CD4-positive, alpha-beta T cell (primary cell): ENCODE measurements at regions of chr22 and their contacts with region 1.

Region 1: GRCh38 chr22:32474635-32475467 is at the start of gene FBXO7:
- DNase-seq: peak; percentile 68 to 94 (median 82)
- ATAC-seq: peak; percentile 82
- H3K4me3 ChIP-seq: peak within 1 kb of the TSS; percentile 91
- H3K4me3 Mint-ChIP-seq: peak within 1 kb of the TSS; percentile 95
- H3K27ac ChIP-seq: peak within 1 kb of the TSS; percentile 84 to 95
- H3K27ac Mint-ChIP-seq: no peak within 1 kb of the TSS
- H3K4me1 ChIP-seq: peaks cover 20% of the 10 kb centered on the region
- H3K4me1 Mint-ChIP-seq: peaks cover 26% of the 10 kb centered on the region
- H3K27me3 ChIP-seq: no peaks in the 10 kb centered on the region
- H3K27me3 Mint-ChIP-seq: no peaks in the 10 kb centered on the region
- CTCF ChIP-seq: peak; percentile 23
- total RNA-seq, gene FBXO7: 161 to 169 TPM

Region 2: DNA sequence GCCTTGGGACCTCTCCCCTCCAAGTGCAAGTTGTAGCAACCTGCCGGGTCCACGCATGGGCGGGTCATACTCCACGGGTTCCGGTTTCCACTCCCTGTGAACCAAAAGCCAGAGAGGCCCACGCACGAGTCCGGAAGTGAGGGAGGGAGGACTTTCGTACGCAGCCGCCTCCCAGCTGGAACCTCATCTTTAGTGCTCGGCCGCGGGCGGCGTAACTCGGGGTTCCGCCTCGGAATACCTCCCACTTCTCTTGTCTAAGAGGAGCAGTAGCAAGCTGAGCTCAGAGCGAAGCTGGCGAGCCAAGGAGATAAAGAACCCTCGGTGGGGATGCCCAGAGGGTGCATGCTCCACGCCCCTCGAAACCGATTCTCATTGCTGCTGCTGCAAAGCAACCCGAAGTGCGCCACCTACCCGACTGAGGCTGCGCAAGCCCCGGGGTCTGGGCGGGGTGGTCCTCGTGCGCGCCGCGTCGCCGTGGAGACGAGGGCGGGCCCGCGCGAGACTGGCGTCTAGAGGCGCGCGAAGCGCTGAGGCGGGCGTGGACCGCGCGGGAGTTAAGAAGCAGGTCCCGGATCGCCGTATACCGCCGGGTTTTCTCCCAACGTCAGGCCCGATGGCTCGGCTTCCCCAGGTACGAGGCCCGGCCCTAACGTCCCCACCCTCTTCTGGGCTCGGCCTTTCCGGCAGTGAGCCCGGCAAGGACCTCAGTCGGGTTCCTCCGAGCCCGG is 978.7 kb before region 1 on chr22 and contains the start of gene SFI1:
- CTCF ChIA-PET with region 1: no interaction called
- POLR2A ChIA-PET with region 1: no interaction called
- intact Hi-C with region 1: loop called in 1 of 2 experiments (anchors 10 kb)
- DNase-seq: peak; percentile 93 to 98 (median 96)
- ATAC-seq: peak; percentile 78
- H3K4me3 ChIP-seq: peak within 1 kb of the TSS; percentile 100
- H3K4me3 Mint-ChIP-seq: peak within 1 kb of the TSS; percentile 82
- H3K27ac ChIP-seq: peak within 1 kb of the TSS; percentile 94 to 97
- H3K27ac Mint-ChIP-seq: peak within 1 kb of the TSS; percentile 97
- H3K4me1 ChIP-seq: peaks cover 64% of the 10 kb centered on the region
- H3K4me1 Mint-ChIP-seq: peaks cover 57% of the 10 kb centered on the region
- H3K27me3 ChIP-seq: no peaks in the 10 kb centered on the region
- H3K27me3 Mint-ChIP-seq: no peaks in the 10 kb centered on the region
- CTCF ChIP-seq: peak; percentile 37
- total RNA-seq, gene SFI1: 281 to 291 TPM

Region 3: GRCh38 chr22:31970490-31971444 is 504.1 kb before region 1 on chr22:
- CTCF ChIA-PET with region 1: interaction called, 16 read pairs
- POLR2A ChIA-PET with region 1: no interaction called
- intact Hi-C with region 1: no loop called
- DNase-seq: peak; percentile 77 to 93 (median 87)
- ATAC-seq: peak; percentile 93
- H3K4me3 ChIP-seq: peak overlapping the region; percentile 56
- H3K4me3 Mint-ChIP-seq: peak overlapping the region; percentile 82
- H3K27ac ChIP-seq: no peak overlapping the region
- H3K27ac Mint-ChIP-seq: peak overlapping the region; percentile 3
- H3K4me1 ChIP-seq: peaks cover 20% of the 10 kb centered on the region
- H3K4me1 Mint-ChIP-seq: peaks cover 13% of the 10 kb centered on the region
- H3K27me3 ChIP-seq: no peaks in the 10 kb centered on the region
- H3K27me3 Mint-ChIP-seq: no peaks in the 10 kb centered on the region
- CTCF ChIP-seq: peak; percentile 90

Region 4: DNA sequence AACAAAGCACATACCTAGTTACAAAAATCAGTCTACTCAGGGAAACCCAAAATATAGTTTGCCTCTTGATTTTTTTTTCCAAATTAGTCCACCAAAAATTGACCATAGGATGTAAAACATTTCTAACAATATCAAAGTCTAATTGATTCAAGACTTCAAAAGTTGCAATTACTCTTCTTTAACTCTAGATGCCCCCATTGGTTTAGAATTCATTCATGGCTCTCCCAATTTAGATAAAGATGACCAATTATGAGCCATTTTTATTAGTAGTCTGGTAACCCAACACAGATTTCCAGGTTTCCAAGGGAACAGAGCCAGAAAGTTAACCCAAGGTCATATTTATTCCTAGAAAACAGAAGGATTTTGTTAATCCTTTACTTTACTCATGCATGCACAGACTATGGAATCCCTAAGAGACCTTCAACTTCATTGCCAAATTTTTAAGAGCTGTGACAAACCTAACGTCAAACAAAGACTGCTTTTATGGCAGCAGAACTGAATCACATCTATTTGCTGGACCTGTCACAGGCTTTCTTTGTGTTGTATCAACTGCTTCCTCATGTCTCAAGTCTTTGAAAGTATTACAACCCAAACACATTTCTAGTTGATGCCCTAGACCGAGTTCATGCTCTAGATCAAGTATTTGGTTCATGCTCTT is 371.1 kb before region 1 on chr22:
- CTCF ChIA-PET with region 1: no interaction called
- POLR2A ChIA-PET with region 1: no interaction called
- intact Hi-C with region 1: loop called (anchors 1 to 5 kb)
- DNase-seq: peak in 3 of 14 experiments; percentile 41 to 50 (median 44)
- ATAC-seq: no peak
- H3K4me3 ChIP-seq: no peak overlapping the region
- H3K4me3 Mint-ChIP-seq: no peak overlapping the region
- H3K27ac ChIP-seq: no peak overlapping the region
- H3K27ac Mint-ChIP-seq: no peak overlapping the region
- H3K4me1 ChIP-seq: no peaks in the 10 kb centered on the region
- H3K4me1 Mint-ChIP-seq: no peaks in the 10 kb centered on the region
- H3K27me3 ChIP-seq: peaks cover 0 to 1% of the 10 kb centered on the region in 2 experiments
- H3K27me3 Mint-ChIP-seq: peaks cover 44% of the 10 kb centered on the region
- CTCF ChIP-seq: peak; percentile 61

Region 5: DNA sequence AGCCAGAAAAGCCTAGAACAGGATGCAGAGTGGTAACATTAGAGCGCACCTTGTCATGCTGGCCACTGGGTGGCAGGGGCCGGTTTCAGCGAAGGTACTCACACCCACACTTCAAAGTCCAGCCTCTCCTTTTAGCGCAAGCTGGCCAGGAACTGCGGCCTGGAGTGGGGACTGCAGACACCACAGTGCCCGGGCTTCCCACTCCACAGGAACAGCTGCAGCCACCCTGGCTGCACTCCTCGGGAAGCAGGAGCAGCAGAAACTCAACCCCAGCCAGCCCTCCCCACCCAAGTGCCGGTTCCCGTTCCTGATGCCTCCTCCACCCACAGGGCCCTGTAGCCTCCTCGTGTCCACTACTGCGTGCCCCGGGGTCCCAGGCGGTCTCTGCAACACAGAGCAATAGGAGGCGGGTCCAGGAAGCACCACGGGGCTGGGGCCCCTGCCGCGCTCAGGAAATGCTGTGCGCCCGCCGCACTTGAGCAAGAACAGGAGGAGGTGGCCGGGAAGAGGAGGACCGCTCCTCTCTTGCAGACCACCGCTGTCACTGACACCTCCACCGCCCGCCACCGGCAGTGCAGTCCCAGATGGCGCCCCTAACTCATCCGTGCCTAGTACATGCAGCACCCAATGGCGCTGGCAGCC is 272.2 kb before region 1 on chr22:
- CTCF ChIA-PET with region 1: no interaction called
- POLR2A ChIA-PET with region 1: no interaction called
- intact Hi-C with region 1: loop called (anchors 2 to 5 kb)
- DNase-seq: peak in 6 of 14 experiments; percentile 16 to 64 (median 45)
- ATAC-seq: no peak
- H3K4me3 ChIP-seq: peak overlapping the region; percentile 58
- H3K4me3 Mint-ChIP-seq: peak overlapping the region; percentile 89
- H3K27ac ChIP-seq: no peak overlapping the region
- H3K27ac Mint-ChIP-seq: peak overlapping the region; percentile 52
- H3K4me1 ChIP-seq: peaks cover 70% of the 10 kb centered on the region
- H3K4me1 Mint-ChIP-seq: peaks cover 54% of the 10 kb centered on the region
- H3K27me3 ChIP-seq: peaks cover 9% of the 10 kb centered on the region in 2 experiments
- H3K27me3 Mint-ChIP-seq: peaks cover 31% of the 10 kb centered on the region
- CTCF ChIP-seq: peak; percentile 35

Region 6: DNA sequence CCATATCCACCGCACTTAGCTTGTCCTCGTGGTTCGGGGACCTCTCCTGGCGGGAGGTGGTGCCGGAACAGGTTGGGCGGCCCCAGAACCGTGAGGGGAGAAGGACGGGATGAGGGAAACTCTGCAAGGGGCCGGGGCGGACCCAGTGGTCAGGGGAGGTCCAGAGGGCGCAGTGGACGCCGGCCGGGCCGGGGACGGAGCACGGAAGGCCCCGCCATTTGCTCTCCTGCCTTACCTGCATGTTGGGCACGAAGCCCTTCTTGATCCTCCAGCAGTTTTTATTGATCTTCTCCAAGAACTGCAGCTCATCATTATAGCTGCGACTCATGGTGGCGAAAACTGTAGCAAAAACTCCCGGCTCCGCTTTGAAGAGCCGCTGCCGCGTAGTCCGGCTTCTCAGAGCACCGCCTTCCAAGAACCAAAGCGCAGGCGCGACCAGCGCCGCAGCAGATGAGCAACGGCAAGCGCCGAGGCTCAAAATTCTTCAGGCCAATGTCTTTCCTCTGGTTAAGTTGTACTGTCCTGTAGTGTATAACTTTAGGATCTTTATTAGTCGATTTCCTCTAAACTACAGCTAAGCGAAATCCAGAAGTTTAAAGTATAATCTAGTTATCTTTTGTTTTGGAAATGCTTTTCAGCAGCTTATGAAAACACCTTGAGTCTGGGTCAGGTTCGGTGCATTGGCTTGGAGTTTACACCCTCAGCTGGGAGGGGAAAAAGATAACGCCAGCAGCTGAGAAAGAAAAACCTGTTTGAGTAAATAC is 62.8 kb before region 1 on chr22 and contains the start of gene RTCB:
- CTCF ChIA-PET with region 1: interaction called, 23 read pairs
- POLR2A ChIA-PET with region 1: interaction called, 29 read pairs
- intact Hi-C with region 1: loop called (anchors 1 kb)
- DNase-seq: peak; percentile 88 to 96 (median 92)
- ATAC-seq: peak; percentile 85
- H3K4me3 ChIP-seq: peak within 1 kb of the TSS; percentile 72
- H3K4me3 Mint-ChIP-seq: peak within 1 kb of the TSS; percentile 98
- H3K27ac ChIP-seq: peak within 1 kb of the TSS; percentile 25 to 76
- H3K27ac Mint-ChIP-seq: peak within 1 kb of the TSS; percentile 85
- H3K4me1 ChIP-seq: peaks cover 23% of the 10 kb centered on the region
- H3K4me1 Mint-ChIP-seq: peaks cover 55% of the 10 kb centered on the region
- H3K27me3 ChIP-seq: no peaks in the 10 kb centered on the region
- H3K27me3 Mint-ChIP-seq: peaks cover 7% of the 10 kb centered on the region
- CTCF ChIP-seq: no peak
- total RNA-seq, gene RTCB: 30.1 to 36.0 TPM